ENCODE measurements at regions of chr2 and their contacts with region 1.

Region 1: DNA sequence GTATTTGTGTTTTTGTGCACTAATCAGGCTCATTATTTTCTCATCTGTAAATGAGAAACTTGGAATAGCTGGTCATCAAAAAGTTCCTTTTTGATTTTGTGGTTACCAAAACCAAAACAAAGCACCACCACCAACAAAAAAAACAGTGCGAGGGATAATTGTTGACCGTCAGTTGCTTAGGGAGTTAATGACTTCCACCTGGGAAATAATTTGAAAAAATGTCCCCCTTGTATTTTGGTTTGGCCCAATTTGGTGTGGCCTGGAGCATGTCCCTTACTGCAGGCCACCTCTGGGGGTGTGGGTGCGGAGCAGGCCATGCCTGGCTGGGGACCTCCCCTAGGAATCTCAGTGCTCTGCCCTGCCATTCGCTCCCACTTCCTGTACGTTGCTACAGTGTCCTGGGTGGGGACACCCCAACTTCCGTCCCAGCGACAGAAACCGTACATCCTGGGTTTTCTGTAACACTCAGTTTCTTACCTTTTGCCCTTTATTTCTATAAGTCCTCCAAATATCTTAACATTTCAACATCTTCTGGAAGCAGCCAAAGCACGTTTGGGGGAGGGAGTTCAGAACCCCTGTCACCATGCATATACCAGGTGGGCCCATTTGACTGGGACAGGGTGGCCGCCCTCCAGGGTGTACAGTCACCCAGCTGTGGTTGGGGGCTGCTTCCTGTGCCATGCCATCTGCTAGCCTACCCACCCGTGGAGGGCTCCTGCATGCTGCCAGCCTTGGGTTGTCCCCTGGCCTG is 31.3 kb downstream of the NCK2 start:
- DNase-seq: peak; percentile 61
- ATAC-seq: peak; percentile 58
- H3K4me3 Mint-ChIP-seq: peak overlapping the region; percentile 47
- H3K27ac Mint-ChIP-seq: peak overlapping the region; percentile 84
- H3K4me1 Mint-ChIP-seq: peaks cover 95% of the 10 kb centered on the region
- H3K27me3 Mint-ChIP-seq: no peaks in the 10 kb centered on the region

Region 2: DNA sequence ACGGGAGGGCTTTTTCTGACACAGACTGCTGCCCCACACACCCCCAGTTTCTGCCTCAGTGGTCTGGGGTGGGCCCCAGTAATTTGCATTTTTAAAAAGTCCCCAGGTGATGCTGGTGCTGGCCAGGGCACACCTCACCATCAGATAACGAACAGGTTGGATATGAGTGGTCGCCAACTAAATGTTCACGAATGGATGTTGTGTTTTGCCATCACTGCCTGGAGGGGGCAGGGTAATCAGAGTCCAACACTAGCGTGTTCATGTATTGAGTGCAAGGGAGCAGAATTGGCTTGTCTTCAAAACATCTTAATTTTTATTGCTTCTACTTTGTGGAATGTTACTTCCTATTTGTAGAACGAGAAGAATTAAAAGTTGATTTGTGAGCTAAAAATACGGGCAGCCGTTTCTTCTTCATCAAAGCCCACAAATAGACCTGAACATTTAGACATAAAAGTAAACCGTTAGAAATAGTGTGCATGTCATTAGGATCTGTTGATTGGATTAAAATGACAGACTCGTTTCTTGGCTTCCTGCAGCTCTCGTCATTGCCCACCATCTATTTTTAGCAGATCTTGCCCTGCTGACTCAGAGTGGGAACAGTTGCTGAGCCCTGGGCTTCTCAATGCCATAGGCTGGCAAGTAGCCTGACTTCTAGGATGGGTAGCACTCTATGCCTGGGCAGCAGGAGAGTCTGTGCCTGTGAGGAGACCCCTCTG is 13.9 kb after region 1 on chr2:
- CTCF ChIA-PET with region 1: interaction called, 12 read pairs
- POLR2A ChIA-PET with region 1: interaction called, 3 read pairs
- intact Hi-C with region 1: loop called in 1 of 2 experiments (anchors 1 kb)
- DNase-seq: peak; percentile 83
- ATAC-seq: peak; percentile 90
- H3K4me3 Mint-ChIP-seq: peak overlapping the region; percentile 61
- H3K27ac Mint-ChIP-seq: peak overlapping the region; percentile 96
- H3K4me1 Mint-ChIP-seq: peaks cover 94% of the 10 kb centered on the region
- H3K27me3 Mint-ChIP-seq: no peaks in the 10 kb centered on the region

Measured in activated CD4-positive, alpha-beta T cell treated with anti-CD3 and anti-CD28 coated beads for 36 hours (primary cell).